Activated CD8-positive, alpha-beta T cell treated with anti-CD3 and anti-CD28 coated beads for 36 hours (primary cell): ENCODE measurements at regions of chr3 and their contacts with region 1.

Region 1: DNA sequence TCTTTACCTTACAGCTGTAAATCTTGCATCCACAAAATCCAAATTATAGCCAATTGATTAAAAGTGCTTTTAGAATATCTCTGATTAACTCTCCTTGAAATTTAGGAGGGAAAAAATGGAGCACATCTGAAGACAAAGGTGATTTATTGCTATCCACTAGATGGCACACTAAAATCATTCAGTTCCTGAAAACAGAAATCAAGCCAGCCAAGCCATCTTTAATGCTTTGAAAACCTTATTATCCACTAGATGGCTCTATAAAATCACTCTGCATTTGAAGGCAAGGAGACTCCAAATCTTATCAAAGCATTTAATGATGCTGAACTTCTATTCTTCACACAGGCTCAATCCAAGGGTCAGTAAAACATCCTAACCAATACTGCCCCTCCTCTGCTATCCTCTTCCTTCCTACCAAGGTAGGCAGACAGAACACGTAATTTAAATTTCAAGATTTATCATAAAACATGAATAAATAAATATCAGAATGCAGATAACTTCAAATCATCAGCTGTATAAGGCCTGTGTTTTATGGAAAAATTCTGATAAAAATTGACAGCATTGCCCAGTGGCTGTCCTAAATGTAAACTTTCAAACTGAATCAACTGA is 48.4 kb downstream of the GOLIM4 start:
- DNase-seq: no peak
- ATAC-seq: peak; percentile 74
- H3K4me3 Mint-ChIP-seq: no peak overlapping the region
- H3K27ac Mint-ChIP-seq: no peak overlapping the region
- H3K4me1 Mint-ChIP-seq: no peaks in the 10 kb centered on the region
- H3K27me3 Mint-ChIP-seq: no peaks in the 10 kb centered on the region
- CTCF ChIP-seq: peak; percentile 82

Region 2: GRCh38 chr3:167967257-167968036 is 79.8 kb before region 1 on chr3:
- CTCF ChIA-PET with region 1: no interaction called
- POLR2A ChIA-PET with region 1: no interaction called
- intact Hi-C with region 1: no loop called
- DNase-seq: no peak
- ATAC-seq: no peak
- H3K4me3 Mint-ChIP-seq: no peak overlapping the region
- H3K27ac Mint-ChIP-seq: no peak overlapping the region
- H3K4me1 Mint-ChIP-seq: no peaks in the 10 kb centered on the region
- H3K27me3 Mint-ChIP-seq: no peaks in the 10 kb centered on the region
- CTCF ChIP-seq: no peak

Region 3: GRCh38 chr3:168095611-168096209 is 48.4 kb after region 1 on chr3 and contains the start of gene GOLIM4:
- CTCF ChIA-PET with region 1: interaction called, 5 read pairs
- POLR2A ChIA-PET with region 1: no interaction called
- intact Hi-C with region 1: loop called (anchors 5 kb)
- DNase-seq: peak; percentile 79
- ATAC-seq: peak; percentile 85
- H3K4me3 Mint-ChIP-seq: peak within 1 kb of the TSS; percentile 74
- H3K27ac Mint-ChIP-seq: peak within 1 kb of the TSS; percentile 78
- H3K4me1 Mint-ChIP-seq: peaks cover 18% of the 10 kb centered on the region
- H3K27me3 Mint-ChIP-seq: peaks cover 28% of the 10 kb centered on the region
- CTCF ChIP-seq: no peak
- total RNA-seq, gene GOLIM4: 5.5 to 6.4 TPM

Region 4: DNA sequence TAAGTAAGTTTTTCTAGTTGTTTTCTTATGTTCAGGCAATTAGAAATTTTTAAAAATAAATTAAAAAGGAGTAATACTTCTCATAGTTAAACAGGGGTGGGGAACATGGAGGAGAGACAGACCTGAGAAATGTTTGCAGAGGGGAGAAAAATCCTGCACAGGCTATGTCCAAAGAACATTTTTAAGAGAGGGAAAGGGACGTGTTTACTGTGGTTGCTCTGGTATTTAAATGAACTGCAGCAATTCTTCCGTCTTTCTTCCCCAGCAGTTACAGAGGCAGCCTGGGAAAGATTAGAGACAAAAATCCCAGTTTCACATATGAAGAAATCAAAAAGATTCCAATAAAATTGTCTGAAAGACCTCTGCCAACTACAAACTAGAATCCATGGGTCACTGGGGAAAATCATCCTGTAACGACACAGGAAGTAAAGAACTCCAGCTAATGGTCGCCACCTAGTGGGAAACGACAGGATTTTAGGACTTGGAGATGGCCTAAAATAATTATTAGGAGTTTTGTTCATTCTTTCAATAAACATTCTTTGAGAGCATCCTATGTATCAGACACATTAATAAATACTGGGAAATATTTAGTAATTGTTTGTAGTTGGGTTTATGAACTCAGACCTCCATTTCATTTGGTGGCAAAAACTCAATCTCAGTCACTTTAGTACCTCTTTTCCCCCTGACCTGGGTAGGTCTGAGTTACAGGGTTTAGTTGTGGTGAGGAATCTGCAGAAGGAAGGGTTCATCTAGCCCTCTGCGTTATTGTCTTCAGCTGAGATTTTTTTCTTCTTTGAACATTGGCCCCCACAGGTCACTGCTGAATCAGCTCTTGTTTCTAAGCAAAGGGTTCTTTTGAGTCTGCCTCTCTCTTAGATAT is 118.3 kb after region 1 on chr3:
- CTCF ChIA-PET with region 1: interaction called, 92 read pairs
- POLR2A ChIA-PET with region 1: no interaction called
- intact Hi-C with region 1: loop called (anchors 1 kb)
- DNase-seq: peak; percentile 66
- ATAC-seq: peak; percentile 66
- H3K4me3 Mint-ChIP-seq: no peak overlapping the region
- H3K27ac Mint-ChIP-seq: no peak overlapping the region
- H3K4me1 Mint-ChIP-seq: peaks cover 4% of the 10 kb centered on the region
- H3K27me3 Mint-ChIP-seq: no peaks in the 10 kb centered on the region
- CTCF ChIP-seq: peak; percentile 71